ENCODE measurements at regions of chr19 and their contacts with region 1.

Region 1: DNA sequence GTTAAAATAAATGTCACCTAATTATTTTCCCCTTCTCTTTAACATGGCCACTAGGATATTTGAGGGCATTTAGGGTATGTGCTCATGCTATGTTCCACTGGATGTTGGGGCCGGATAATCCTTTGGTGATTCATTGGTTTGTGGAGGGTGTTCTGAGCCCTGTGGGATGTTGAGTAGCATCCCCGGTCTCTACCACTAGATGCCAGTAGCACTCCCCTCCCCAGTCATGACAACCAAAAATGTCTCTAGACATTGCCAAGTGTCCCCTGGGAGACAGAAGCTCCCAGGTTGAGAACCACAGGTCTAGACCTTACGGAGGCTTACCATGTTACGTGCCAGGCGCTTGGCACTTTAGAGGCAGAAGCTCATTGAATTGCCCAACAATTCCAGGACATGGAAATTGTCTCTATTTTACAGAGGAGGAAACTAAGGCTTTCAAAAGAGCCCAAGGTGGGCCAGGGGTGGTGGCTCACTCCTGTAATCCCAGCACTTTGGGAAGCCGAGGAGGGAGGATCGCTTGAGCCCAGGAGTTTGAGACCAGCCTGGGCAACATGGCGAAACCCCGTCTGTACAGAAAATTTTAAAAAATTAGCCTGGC is 14.1 kb downstream of the SHANK1 start:
- DNase-seq: peak; percentile 62
- H3K4me3 ChIP-seq: no peak overlapping the region
- H3K27ac ChIP-seq: no peak overlapping the region
- H3K4me1 ChIP-seq: peaks cover 18% of the 10 kb centered on the region
- H3K27me3 ChIP-seq: no peaks in the 10 kb centered on the region
- CTCF ChIP-seq: peak; percentile 72 to 81
- POLR2A ChIP-seq: no peak

Region 2: GRCh38 chr19:50669302-50670101 is 36.0 kb before region 1 on chr19:
- CTCF ChIA-PET with region 1: interaction called, 41 read pairs
- POLR2A ChIA-PET with region 1: no interaction called
- dilution Hi-C with region 1: no loop called
- intact Hi-C with region 1: loop called (anchors 2 kb)
- DNase-seq: peak; percentile 31
- H3K4me3 ChIP-seq: no peak overlapping the region
- H3K27ac ChIP-seq: no peak overlapping the region
- H3K4me1 ChIP-seq: no peaks in the 10 kb centered on the region
- H3K27me3 ChIP-seq: peaks cover 21 to 31% of the 10 kb centered on the region in 2 experiments
- CTCF ChIP-seq: peak; percentile 75 to 76
- POLR2A ChIP-seq: no peak

Region 3: DNA sequence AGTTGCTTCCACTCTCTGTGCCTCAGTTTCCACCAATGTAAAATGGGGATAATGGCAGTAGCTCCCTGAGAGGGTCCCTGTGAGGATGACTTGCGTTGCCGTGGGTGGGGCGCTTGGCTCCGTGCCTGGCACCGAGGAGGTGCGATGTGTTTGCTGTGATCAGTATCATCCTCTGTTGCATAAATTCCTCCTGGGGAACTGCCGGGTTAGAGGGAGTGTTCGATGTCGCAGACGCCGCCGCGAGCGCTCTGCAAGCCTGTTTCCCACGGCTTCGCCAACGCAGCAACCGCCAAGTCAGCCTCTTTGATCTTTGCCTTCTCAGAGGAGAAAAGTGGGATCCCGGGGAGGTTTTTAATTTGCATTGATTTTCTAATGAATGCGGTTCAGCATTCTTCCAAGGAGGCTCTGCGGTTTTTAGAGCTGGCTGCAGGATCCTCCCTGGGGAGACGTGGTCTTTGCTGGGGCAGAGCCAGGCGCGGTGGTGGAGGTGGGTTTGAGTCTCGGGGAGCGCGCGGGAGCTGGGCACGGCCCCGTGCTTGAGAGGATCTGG is 72.3 kb after region 1 on chr19:
- CTCF ChIA-PET with region 1: interaction called, 116 read pairs
- POLR2A ChIA-PET with region 1: no interaction called
- dilution Hi-C with region 1: no loop called
- intact Hi-C with region 1: loop called (anchors 1 kb)
- DNase-seq: no peak
- H3K4me3 ChIP-seq: no peak overlapping the region
- H3K27ac ChIP-seq: no peak overlapping the region
- H3K4me1 ChIP-seq: no peaks in the 10 kb centered on the region
- H3K27me3 ChIP-seq: peaks cover 26 to 29% of the 10 kb centered on the region in 2 experiments
- CTCF ChIP-seq: no peak
- POLR2A ChIP-seq: no peak